PC-9 (cell line): ENCODE measurements at regions of chr3 and their contacts with region 1.

Region 1: DNA sequence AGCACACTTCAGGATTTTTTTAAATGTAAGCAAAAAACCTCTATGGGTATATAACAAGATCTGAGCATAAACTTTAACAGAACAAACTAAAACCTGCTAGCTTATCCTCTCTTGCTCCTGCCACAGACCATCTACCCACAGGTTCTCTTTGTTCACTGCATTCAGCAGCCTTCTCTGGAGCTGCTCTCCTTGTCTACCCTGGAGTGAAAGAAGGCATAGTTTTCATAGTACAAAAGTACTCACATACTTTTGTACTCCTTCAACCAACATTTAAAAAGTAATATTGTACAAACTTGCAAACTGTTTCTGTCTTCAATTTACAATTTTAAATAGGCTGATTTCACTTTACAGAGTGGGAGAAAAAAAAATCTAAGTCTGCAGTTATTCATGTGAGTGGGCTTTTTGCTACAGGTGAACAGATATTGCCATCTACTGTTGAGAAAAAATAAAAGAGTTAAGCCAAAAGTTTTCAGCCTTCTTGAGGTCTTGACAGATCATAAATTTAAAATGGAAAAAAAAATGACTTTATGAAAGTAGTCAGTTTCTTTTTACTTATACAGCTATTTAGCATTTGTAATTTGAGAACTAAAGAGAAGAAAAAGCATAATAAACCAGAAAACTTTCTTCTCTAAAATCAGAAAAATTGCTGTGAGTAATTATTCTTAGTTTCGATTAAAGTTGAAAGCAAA is 20.4 kb downstream of the TERC start:
- DNase-seq: no peak
- H3K4me3 ChIP-seq: no peak overlapping the region
- H3K27ac ChIP-seq: no peak overlapping the region
- H3K4me1 ChIP-seq: no peaks in the 10 kb centered on the region
- H3K27me3 ChIP-seq: no peaks in the 10 kb centered on the region; the same call in 1 of the 2 replicates
- CTCF ChIP-seq: peak; percentile 70

Region 2: GRCh38 chr3:168213920-168214319 is 1530.6 kb before region 1 on chr3:
- CTCF ChIA-PET with region 1: no interaction called
- POLR2A ChIA-PET with region 1: no interaction called
- intact Hi-C with region 1: loop called (anchors 1 kb)
- DNase-seq: no peak
- H3K4me3 ChIP-seq: no peak overlapping the region
- H3K27ac ChIP-seq: no peak overlapping the region
- H3K4me1 ChIP-seq: no peaks in the 10 kb centered on the region
- H3K27me3 ChIP-seq: no peaks in the 10 kb centered on the region
- CTCF ChIP-seq: no peak

Region 3: DNA sequence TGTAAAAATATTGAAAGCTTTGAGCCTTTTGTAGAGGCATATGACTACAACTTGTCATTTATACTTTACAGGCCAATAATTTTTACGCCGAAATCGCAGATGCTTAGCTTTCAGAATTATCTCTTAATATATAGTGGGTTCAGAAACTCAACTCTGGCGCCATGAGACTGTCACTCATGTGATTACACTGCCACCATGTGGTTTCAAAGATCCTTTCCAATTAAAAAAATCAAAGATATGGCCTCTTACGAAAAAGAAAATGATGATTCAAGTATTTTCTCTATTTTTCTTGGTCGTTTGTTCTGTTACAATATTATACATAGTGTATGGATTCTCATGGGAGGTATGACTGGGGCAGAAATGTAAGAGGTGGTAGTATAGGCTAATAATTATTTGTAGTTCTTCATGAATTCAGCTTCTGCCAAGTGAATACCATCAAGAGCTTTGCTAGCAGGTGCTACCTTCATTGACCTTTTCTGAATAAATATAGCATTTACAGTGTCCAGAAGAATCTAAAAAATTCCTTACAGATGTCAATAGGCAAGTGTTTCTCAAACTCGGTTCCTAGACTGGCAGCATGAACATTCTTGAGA is 897.1 kb before region 1 on chr3:
- CTCF ChIA-PET with region 1: no interaction called
- POLR2A ChIA-PET with region 1: no interaction called
- intact Hi-C with region 1: loop called (anchors 5 kb)
- DNase-seq: peak in 1 of 2 experiments; percentile 38
- H3K4me3 ChIP-seq: no peak overlapping the region; the same call in 1 of the 2 replicates
- H3K27ac ChIP-seq: no peak overlapping the region
- H3K4me1 ChIP-seq: no peaks in the 10 kb centered on the region
- H3K27me3 ChIP-seq: peaks cover 19% of the 10 kb centered on the region; the same call in 1 of the 2 replicates
- CTCF ChIP-seq: peak; percentile 89

Region 4: GRCh38 chr3:168952551-168952950 is 792.0 kb before region 1 on chr3:
- CTCF ChIA-PET with region 1: no interaction called
- POLR2A ChIA-PET with region 1: no interaction called
- intact Hi-C with region 1: loop called (anchors 10 kb)
- DNase-seq: peak in 1 of 2 experiments; percentile 55
- H3K4me3 ChIP-seq: no peak overlapping the region
- H3K27ac ChIP-seq: peak overlapping the region; percentile 64
- H3K4me1 ChIP-seq: peaks cover 33% of the 10 kb centered on the region
- H3K27me3 ChIP-seq: no peaks in the 10 kb centered on the region
- CTCF ChIP-seq: peak; percentile 58; the same call in 1 of the 2 replicates

Region 5: DNA sequence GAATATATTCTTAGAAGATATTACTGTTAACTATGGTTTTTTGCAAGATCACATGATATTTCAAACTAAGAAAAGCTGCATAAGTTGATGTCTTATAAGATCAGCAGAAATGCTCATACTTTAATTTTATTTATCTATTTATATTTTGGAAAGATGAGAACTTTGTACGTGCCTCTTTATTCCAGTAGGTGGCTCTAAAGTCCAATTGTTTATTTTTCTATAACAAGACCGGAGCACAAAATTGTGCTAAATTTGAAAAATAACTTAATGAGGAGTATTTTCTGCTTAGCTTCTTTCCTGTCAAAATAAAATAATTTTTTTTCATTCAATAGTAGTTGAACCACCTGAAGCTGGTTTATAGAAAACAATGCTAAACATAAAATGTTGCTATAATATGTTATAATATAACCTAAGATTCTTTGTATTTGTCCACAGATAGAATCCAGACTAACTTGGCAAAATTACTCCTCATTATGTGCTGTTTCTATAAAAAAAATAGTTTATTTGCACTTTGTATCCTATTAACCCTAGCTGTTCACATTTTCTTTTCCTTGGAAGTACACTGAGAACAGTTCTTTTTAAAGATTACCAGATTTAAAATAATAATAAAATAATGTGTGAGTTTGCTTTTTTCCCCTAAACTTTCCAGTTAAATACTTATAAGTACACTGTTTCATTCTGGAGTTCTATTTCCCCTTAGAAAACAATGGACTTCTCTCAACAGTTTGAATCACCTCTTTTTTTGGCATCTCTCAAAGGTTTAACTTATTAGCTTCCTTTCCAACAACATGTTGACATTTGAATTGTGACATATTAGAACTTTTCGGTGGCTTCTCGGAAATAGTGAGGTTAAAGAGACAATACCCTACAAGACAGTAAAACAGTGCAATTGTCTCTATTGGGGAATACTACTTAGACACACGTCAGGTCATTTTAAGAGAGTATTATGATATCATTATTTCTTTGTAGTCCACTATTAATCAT is 611.0 kb before region 1 on chr3:
- CTCF ChIA-PET with region 1: no interaction called
- POLR2A ChIA-PET with region 1: no interaction called
- intact Hi-C with region 1: loop called (anchors 5 kb)
- DNase-seq: no peak
- H3K4me3 ChIP-seq: no peak overlapping the region
- H3K27ac ChIP-seq: 0 out of 2 replicates have a peak overlapping the region, but pooled peaks have one; percentile 13
- H3K4me1 ChIP-seq: peaks cover 19% of the 10 kb centered on the region; the same call in 1 of the 2 replicates
- H3K27me3 ChIP-seq: no peaks in the 10 kb centered on the region
- CTCF ChIP-seq: peak; percentile 82

Region 6: GRCh38 chr3:169668957-169669681 is 75.4 kb before region 1 on chr3:
- CTCF ChIA-PET with region 1: no interaction called
- POLR2A ChIA-PET with region 1: no interaction called
- intact Hi-C with region 1: loop called (anchors 2 kb)
- DNase-seq: peak; percentile 78 to 88
- H3K4me3 ChIP-seq: peak overlapping the region; percentile 61
- H3K27ac ChIP-seq: no peak overlapping the region
- H3K4me1 ChIP-seq: peaks cover 18% of the 10 kb centered on the region; the same call in 1 of the 2 replicates
- H3K27me3 ChIP-seq: peaks cover 4% of the 10 kb centered on the region; the same call in 1 of the 2 replicates
- CTCF ChIP-seq: peak; percentile 91